A673 (cell line): ENCODE measurements at regions of chr21 and their contacts with region 1.

Region 1: DNA sequence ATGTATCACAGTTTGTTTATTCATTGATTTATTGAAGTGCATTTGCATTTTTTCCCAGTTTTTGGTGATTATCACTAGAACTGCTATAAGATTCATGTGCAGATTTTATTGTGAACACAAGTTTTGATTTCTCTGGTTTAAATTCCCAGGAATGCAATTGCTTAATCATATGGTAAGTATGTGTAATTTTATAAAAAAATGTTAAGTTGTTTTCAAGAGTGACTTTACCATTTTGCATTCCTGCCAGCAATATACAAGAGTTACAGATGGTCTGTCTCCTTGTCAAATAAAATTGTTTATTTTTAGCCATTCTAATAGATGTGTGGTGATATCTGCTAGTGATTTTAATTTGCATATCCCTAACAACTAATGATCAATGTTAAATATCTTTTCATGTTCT is 127.3 kb upstream of the APP start:
- DNase-seq: no peak
- H3K4me3 ChIP-seq: no peak overlapping the region
- H3K27ac ChIP-seq: no peak overlapping the region
- H3K4me1 ChIP-seq: no peaks in the 10 kb centered on the region
- H3K27me3 ChIP-seq: no peaks in the 10 kb centered on the region
- CTCF ChIP-seq: no peak

Region 2: DNA sequence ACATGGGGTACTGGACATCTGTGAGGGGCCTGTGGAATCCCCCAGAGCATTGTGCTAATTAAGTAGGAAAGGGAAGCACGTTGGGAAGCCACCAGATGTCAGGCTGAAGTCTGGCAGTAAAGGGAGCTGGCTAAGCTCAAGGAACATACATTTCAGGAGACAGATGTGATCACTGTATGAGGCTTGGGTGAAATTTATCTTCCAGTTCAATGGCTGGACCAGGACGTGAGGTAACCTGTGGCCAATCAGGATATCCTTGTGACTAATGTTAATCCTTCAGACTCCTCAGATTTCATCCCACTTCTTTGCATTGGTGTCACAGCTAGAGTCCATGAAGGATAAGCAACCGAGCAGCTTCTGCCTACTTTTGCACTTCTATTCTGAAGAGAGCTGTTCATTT is 17.1 kb before region 1 on chr21:
- CTCF ChIA-PET with region 1: no interaction called
- POLR2A ChIA-PET with region 1: interaction called, 15 read pairs
- intact Hi-C with region 1: no loop called
- DNase-seq: peak; percentile 67
- H3K4me3 ChIP-seq: no peak overlapping the region
- H3K27ac ChIP-seq: no peak overlapping the region
- H3K4me1 ChIP-seq: peaks cover 25% of the 10 kb centered on the region
- H3K27me3 ChIP-seq: no peaks in the 10 kb centered on the region
- CTCF ChIP-seq: peak; percentile 23; the same call in 1 of the 2 replicates

Region 3: DNA sequence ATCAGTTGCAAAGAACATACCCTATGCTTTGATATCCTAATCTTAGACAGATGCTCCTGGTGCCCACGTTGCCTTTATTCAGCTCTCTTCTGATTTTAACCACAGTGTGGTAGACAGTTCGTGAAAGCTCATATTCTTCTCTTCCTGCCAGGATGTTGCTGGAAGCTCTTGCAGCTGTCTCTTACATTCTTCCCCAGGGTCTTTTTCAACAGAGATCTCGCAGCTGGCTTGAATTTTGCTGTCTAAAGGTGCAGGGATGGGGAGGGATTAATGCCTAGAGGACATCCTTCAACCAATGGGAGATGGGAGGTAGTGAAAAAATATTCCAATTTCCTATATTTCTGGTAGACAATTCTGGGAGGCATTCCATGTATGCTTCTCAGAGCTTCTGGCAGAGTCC is 22.7 kb after region 1 on chr21:
- CTCF ChIA-PET with region 1: no interaction called
- POLR2A ChIA-PET with region 1: no interaction called
- intact Hi-C with region 1: loop called (anchors 2 kb)
- DNase-seq: no peak
- H3K4me3 ChIP-seq: no peak overlapping the region
- H3K27ac ChIP-seq: no peak overlapping the region
- H3K4me1 ChIP-seq: no peaks in the 10 kb centered on the region
- H3K27me3 ChIP-seq: no peaks in the 10 kb centered on the region
- CTCF ChIP-seq: no peak

Region 4: DNA sequence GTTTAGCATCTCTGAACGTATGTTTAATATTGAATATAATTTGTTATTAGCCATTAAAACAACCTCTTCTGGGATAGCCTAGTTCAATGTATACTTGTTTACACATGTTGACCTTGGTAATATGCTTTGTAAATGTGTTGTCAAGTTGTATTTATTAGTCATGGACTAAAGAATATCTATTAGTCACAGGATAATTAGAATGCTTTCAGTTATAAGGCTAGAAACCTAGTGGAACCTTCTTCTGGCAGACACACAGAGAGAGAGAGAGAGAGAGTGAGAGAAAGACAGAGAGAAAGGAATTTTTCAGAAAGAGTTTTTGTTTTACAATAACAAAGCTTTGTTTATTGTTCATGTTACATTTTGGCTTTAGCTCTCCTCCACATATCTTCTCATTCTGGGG is 53.8 kb after region 1 on chr21:
- CTCF ChIA-PET with region 1: no interaction called
- POLR2A ChIA-PET with region 1: no interaction called
- intact Hi-C with region 1: no loop called
- DNase-seq: no peak
- H3K4me3 ChIP-seq: no peak overlapping the region
- H3K27ac ChIP-seq: no peak overlapping the region
- H3K4me1 ChIP-seq: no peaks in the 10 kb centered on the region
- H3K27me3 ChIP-seq: no peaks in the 10 kb centered on the region
- CTCF ChIP-seq: no peak

Region 5: DNA sequence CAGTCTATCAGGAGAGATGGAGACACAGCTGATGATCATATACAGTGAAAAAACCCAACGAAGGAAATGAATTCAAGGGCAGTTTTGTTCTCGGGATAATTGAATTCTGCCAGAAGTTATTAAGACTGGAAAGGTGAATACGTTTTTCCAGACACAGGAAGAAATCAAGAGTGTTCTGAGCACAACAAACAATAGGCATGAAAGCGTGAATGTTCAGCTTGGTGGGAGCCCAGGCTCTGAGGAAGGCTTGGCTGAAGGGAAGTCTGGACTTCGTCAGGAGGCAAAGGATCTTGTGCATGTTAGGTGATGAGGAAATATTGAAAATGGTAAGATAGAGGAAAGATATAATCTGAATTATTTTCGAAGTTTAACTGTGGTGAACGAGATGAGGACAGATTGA is 224.9 kb after region 1 on chr21:
- CTCF ChIA-PET with region 1: no interaction called
- POLR2A ChIA-PET with region 1: no interaction called
- intact Hi-C with region 1: no loop called
- DNase-seq: no peak
- H3K4me3 ChIP-seq: no peak overlapping the region
- H3K27ac ChIP-seq: no peak overlapping the region
- H3K4me1 ChIP-seq: no peaks in the 10 kb centered on the region
- H3K27me3 ChIP-seq: no peaks in the 10 kb centered on the region
- CTCF ChIP-seq: no peak